Activated CD4-positive, alpha-beta T cell treated with anti-CD3 and anti-CD28 coated beads for 36 hours (primary cell): ENCODE measurements at regions of chr16 and their contacts with region 1.

Region 1: GRCh38 chr16:28823872-28824716 is 1.3 kb downstream of the ATXN2L start:
- DNase-seq: peak; percentile 98
- ATAC-seq: peak; percentile 80
- H3K4me3 Mint-ChIP-seq: peak overlapping the region; percentile 96
- H3K27ac Mint-ChIP-seq: peak overlapping the region; percentile 100
- H3K4me1 Mint-ChIP-seq: peaks cover 45% of the 10 kb centered on the region
- H3K27me3 Mint-ChIP-seq: no peaks in the 10 kb centered on the region

Region 2: DNA sequence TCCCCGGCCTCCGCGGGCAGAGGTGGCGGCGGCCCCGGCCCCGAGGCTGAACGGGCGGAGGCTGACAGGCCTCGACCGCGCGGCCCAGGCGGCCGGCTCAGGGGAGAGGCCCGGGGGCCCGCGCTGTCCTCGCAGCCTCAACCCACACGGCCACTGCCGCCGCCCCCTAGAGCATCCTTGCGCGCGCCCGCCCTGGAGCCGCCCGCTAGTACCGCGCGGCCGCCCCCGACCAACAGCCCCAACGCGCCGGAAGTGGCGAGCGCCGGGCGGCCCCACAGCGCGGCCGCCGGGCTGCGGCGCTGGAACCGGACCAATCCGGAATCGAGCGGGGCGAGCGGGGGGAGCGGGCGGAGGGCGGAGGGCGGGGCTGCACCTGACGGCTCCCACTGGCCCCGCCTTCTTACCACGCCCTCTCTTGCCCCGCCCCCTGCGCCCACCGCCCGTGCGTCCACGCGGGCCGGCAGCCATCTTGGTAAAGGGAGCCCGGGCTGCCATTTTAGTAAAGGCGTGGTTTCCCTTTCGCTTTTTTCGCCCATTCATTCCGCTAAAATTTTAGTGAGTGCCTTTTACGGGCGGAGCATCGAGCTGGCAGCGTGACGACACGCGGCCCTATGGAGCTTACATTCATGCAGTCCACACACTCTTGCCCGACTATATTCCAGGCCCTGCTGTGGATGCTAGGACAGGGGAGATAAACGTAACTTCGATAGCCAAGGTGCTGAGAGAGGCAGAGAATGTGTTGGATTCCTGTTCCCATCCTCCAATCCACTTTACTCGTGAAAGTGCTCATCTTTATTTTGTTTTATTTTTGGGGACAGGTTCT is 612.2 kb before region 1 on chr16 and contains the start of gene XPO6:
- CTCF ChIA-PET with region 1: no interaction called
- POLR2A ChIA-PET with region 1: no interaction called
- intact Hi-C with region 1: loop called in 1 of 2 experiments (anchors 5 kb)
- DNase-seq: peak; percentile 100
- ATAC-seq: peak; percentile 82
- H3K4me3 Mint-ChIP-seq: peak within 1 kb of the TSS; percentile 96
- H3K27ac Mint-ChIP-seq: peak within 1 kb of the TSS; percentile 99
- H3K4me1 Mint-ChIP-seq: peaks cover 32% of the 10 kb centered on the region
- H3K27me3 Mint-ChIP-seq: no peaks in the 10 kb centered on the region
- total RNA-seq, gene XPO6: 241 to 368 TPM

Region 3: GRCh38 chr16:28835867-28836744 is 12.0 kb after region 1 on chr16:
- CTCF ChIA-PET with region 1: interaction called, 3 read pairs
- POLR2A ChIA-PET with region 1: interaction called, 18 read pairs
- intact Hi-C with region 1: no loop called
- DNase-seq: no peak
- ATAC-seq: no peak
- H3K4me3 Mint-ChIP-seq: no peak overlapping the region
- H3K27ac Mint-ChIP-seq: no peak overlapping the region
- H3K4me1 Mint-ChIP-seq: peaks cover 19% of the 10 kb centered on the region
- H3K27me3 Mint-ChIP-seq: no peaks in the 10 kb centered on the region

Region 4: DNA sequence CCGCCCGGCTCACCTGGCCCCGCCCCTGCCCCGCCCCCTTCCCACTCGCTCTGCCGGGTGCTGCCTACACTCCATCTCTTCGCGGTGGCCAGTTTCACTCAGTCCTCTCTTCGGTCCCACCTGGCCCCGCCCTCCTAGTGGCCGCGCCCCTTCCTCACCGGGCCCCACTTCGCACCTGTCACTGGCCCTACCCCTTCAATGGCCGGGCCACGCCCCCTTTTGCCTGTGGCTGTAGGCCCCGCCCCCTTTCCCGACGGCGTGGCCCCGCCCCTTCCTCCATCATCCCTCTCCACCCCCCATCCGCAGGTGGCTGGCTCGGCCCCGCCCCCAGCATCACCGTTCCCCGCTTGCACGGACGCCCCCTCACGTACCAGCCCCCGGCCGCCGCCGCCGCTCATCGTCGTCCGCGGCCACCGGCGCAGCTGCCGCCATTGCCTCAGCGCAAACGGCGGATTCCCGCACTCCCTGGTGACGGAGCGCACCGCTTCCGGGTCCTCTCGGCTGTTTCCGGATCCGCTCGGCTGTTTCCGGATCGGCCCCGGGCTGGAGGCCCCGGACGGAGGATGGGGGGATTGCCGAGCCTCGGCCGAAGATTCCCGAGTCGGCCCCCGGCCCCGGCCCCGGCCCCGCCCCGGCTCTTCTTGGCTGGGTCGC is 100.8 kb after region 1 on chr16 and contains the start of gene RABEP2:
- CTCF ChIA-PET with region 1: no interaction called
- POLR2A ChIA-PET with region 1: no interaction called
- intact Hi-C with region 1: loop called in 1 of 2 experiments (anchors 1 kb)
- DNase-seq: peak; percentile 99
- ATAC-seq: peak; percentile 93
- H3K4me3 Mint-ChIP-seq: peak within 1 kb of the TSS; percentile 87
- H3K27ac Mint-ChIP-seq: peak within 1 kb of the TSS; percentile 96
- H3K4me1 Mint-ChIP-seq: peaks cover 14% of the 10 kb centered on the region
- H3K27me3 Mint-ChIP-seq: no peaks in the 10 kb centered on the region
- total RNA-seq, gene RABEP2: 8.1 to 12.9 TPM

Region 5: GRCh38 chr16:28974437-28975157 is 150.5 kb after region 1 on chr16 and contains the start of gene SPNS1:
- CTCF ChIA-PET with region 1: interaction called, 4 read pairs
- POLR2A ChIA-PET with region 1: no interaction called
- intact Hi-C with region 1: loop called in 1 of 2 experiments (anchors 1 kb)
- DNase-seq: peak; percentile 98
- ATAC-seq: peak; percentile 94
- H3K4me3 Mint-ChIP-seq: peak within 1 kb of the TSS; percentile 98
- H3K27ac Mint-ChIP-seq: peak within 1 kb of the TSS; percentile 93
- H3K4me1 Mint-ChIP-seq: peaks cover 30% of the 10 kb centered on the region
- H3K27me3 Mint-ChIP-seq: no peaks in the 10 kb centered on the region
- total RNA-seq, gene SPNS1: 12.7 to 14.2 TPM

Region 6: DNA sequence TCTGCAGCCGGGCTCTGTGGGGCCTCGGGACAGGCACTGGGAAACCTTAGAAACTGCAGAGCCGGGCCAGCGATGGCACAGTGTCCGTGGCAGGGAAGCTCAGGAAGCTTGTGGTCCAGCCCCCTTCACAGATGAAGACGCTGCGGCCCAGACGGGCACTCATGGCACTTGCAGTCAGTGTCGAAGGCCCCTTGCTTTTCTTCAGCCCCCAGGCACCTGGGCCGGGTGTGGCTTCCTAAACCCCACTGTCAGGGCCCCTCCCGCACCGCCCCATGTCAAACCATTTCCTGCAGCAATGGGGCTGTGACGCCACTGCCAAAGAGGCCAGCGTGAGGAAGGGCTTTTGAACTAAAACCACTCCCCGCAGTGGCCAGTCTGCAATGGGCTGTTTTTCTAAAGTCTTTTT is 324.8 kb after region 1 on chr16:
- CTCF ChIA-PET with region 1: no interaction called
- POLR2A ChIA-PET with region 1: no interaction called
- intact Hi-C with region 1: no loop called
- DNase-seq: peak; percentile 76
- ATAC-seq: peak; percentile 78
- H3K4me3 Mint-ChIP-seq: peak overlapping the region; percentile 36
- H3K27ac Mint-ChIP-seq: peak overlapping the region; percentile 38
- H3K4me1 Mint-ChIP-seq: peaks cover 47% of the 10 kb centered on the region
- H3K27me3 Mint-ChIP-seq: no peaks in the 10 kb centered on the region

Region 7: DNA sequence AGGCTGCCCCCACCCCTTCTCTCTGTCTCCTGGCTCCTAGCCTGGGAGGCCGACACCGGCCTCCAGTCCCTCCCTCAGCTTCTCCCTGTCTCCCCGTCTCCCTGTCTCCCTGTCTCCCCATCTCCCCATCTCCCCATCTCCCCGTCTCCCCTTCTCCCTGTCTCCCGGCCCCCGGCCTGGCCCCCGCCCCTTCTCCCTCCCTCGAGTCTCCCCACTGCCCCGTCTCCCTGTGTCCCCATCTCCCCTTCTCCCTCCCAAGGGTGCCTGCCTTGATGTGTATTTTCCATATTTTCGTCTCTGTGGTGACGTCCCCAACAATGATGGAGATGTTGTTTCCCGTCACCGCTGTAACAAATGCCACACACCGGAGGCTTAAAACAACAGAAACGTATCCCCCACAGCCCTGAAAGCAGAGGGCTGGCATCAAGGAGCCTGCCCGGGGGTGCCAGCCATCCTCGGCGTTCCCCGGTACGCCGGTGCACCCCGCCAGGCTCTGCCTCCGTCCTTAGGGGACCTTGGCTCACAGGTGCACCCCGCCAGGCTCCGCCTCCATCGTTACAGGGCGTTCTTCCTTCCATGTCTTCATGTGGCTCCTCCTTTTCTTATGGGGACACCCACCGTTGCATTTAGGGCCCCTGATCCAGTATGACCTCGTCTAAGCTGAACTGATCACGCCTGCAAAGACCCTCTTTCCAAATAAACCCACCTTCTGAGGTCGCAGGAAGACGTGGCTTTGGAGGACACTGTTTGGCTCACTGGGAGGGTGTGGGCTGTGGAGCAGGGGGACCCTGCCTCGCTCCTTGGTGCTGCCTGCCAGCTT is 430.8 kb after region 1 on chr16:
- CTCF ChIA-PET with region 1: no interaction called
- POLR2A ChIA-PET with region 1: no interaction called
- intact Hi-C with region 1: no loop called
- DNase-seq: no peak
- ATAC-seq: no peak
- H3K4me3 Mint-ChIP-seq: no peak overlapping the region
- H3K27ac Mint-ChIP-seq: no peak overlapping the region
- H3K4me1 Mint-ChIP-seq: peaks cover 13% of the 10 kb centered on the region
- H3K27me3 Mint-ChIP-seq: no peaks in the 10 kb centered on the region

Region 8: GRCh38 chr16:29995911-29996772 is 1172.0 kb after region 1 on chr16 and contains the start of gene INO80E:
- CTCF ChIA-PET with region 1: no interaction called
- POLR2A ChIA-PET with region 1: no interaction called
- intact Hi-C with region 1: loop called in 1 of 2 experiments (anchors 2 kb)
- DNase-seq: peak; percentile 100
- ATAC-seq: peak; percentile 98
- H3K4me3 Mint-ChIP-seq: peak within 1 kb of the TSS; percentile 96
- H3K27ac Mint-ChIP-seq: peak within 1 kb of the TSS; percentile 98
- H3K4me1 Mint-ChIP-seq: peaks cover 25% of the 10 kb centered on the region
- H3K27me3 Mint-ChIP-seq: no peaks in the 10 kb centered on the region
- total RNA-seq, gene INO80E: 80.1 to 106 TPM